ENCODE measurements at regions of chr21 and their contacts with region 1.

Region 1: DNA sequence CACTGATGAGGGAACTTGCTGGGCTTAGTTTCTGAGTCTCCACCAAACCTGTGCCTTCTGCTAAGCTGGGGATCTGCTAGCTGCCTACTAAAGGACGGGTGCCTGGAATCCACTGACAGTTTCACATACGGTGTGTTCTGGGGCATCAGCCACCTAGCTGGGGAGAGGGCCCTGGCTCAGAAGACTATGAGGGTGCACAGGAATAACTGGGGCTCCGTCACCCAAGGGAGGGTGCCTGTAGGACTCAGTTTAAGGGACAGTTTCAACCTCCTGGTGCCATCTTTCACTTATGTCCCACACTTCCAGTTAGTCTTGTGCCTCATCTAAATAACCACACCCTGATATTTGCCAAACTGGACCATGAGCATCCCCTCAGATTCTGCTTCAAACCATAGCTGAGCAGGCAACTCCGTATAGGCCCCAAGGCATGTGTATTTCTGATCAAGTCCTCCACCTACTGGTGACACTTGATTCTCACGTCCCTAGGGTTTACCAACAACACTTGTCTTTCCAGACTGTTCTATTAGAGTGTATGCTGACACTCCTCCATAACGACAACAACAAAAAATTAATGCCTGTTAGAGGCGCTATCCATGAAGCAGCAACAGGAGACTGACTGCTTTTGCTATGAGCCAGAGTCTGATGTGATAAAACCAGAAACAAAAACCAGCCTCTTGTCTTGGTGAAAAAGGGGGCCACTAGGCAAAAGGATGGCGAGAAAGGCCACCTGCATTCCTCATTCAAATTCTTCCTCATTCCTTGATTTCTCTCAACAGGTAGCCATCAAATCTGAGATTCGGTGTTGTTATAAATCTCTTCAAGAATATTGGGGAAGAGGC is 55.0 kb upstream of the PAXBP1 start:
- DNase-seq: peak; percentile 56 to 65
- H3K4me3 ChIP-seq: no peak overlapping the region
- H3K4me3 Mint-ChIP-seq: no peak overlapping the region
- H3K27ac Mint-ChIP-seq: no peak overlapping the region
- H3K4me1 ChIP-seq: no peaks in the 10 kb centered on the region
- H3K4me1 Mint-ChIP-seq: no peaks in the 10 kb centered on the region
- H3K27me3 ChIP-seq: no peaks in the 10 kb centered on the region
- H3K27me3 Mint-ChIP-seq: peaks cover 3% of the 10 kb centered on the region
- CTCF ChIP-seq: peak; percentile 74 to 76

Region 2: DNA sequence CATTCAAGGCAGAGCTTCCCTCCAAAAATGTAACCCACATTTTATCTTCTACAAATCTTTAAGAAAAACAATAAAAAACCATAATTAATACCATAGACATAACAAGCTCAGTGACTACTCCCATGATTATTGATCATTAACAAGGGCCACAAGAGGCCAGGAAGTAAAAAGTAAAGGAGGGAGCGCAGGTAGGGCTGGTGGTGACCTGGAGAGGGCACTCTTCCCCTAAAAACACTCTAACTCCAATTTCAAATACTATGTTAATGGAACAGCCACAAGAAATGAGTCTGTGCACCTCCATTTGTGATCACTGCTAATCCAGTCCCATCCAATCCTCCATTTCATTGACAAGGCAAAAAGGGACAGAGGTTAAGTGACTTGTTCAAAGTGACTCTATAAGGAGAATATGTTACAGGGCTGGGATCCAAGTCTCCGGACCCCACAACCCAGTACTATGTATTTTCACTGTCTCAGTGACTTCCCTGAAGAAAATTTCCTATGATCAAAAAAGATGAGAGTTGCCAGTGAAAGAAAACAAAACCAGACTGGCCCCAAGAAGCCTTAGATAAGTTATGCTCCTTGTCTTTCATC is 173.1 kb before region 1 on chr21:
- CTCF ChIA-PET with region 1: interaction called, 4 read pairs
- POLR2A ChIA-PET with region 1: no interaction called
- intact Hi-C with region 1: loop called (anchors 1 kb)
- DNase-seq: peak in 1 of 2 experiments; percentile 49
- H3K4me3 ChIP-seq: no peak overlapping the region
- H3K4me3 Mint-ChIP-seq: no peak overlapping the region
- H3K27ac Mint-ChIP-seq: no peak overlapping the region
- H3K4me1 ChIP-seq: no peaks in the 10 kb centered on the region
- H3K4me1 Mint-ChIP-seq: no peaks in the 10 kb centered on the region
- H3K27me3 ChIP-seq: no peaks in the 10 kb centered on the region
- H3K27me3 Mint-ChIP-seq: no peaks in the 10 kb centered on the region
- CTCF ChIP-seq: peak; percentile 59 to 68

Region 3: DNA sequence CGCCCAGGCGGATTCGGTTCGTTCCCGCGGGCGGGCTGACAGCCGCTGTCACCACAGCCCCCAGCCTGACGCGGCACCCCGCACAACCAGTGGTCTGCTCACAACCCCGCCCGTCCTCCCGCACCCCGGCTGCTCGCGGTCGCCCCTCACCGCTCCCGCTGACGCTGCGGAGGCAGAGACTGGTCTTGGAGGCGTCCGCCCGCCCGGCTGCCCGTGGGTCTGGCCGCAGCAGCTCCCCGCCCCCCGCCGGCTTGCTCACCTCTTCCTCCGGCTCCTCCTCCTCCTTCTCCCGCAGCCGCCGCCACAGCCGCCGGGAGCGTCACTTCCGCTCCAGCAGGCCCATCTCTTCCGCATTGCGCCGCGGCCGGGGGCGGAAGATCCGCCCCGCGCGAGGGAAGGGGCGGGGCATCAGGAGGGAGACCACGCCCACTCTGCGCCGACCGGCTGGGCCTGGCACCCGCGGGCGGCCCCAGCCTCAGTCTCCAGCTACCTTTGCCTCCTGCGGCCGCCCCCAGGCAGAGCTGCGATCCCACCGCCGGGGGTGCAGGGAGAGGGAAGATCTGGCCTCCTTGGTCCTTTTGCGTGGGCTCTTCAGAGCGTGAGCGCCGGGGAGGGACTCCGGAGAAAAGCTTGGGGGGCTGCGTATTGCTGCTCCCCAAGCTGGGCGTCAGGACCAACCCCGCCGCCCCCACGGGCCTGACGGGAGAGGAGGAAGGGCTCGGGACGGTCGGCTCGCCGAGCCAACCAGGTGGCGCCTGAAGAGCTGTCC is 98.7 kb before region 1 on chr21 and contains the start of gene SYNJ1:
- CTCF ChIA-PET with region 1: no interaction called
- POLR2A ChIA-PET with region 1: interaction called, 18 read pairs
- intact Hi-C with region 1: no loop called
- DNase-seq: peak; percentile 95
- H3K4me3 ChIP-seq: peak within 1 kb of the TSS; percentile 97
- H3K4me3 Mint-ChIP-seq: peak within 1 kb of the TSS; percentile 99
- H3K27ac Mint-ChIP-seq: peak within 1 kb of the TSS; percentile 91
- H3K4me1 ChIP-seq: peaks cover 4% of the 10 kb centered on the region; the same call in 1 of the 2 replicates
- H3K4me1 Mint-ChIP-seq: peaks cover 6% of the 10 kb centered on the region
- H3K27me3 ChIP-seq: no peaks in the 10 kb centered on the region
- H3K27me3 Mint-ChIP-seq: no peaks in the 10 kb centered on the region
- CTCF ChIP-seq: no peak
- total RNA-seq, gene SYNJ1: 8.3 and 11.5 TPM in 2 replicates

Region 4: GRCh38 chr21:32770871-32771523 is 55.6 kb before region 1 on chr21:
- CTCF ChIA-PET with region 1: no interaction called
- POLR2A ChIA-PET with region 1: no interaction called
- intact Hi-C with region 1: loop called (anchors 1 kb)
- DNase-seq: peak; percentile 62 to 67
- H3K4me3 ChIP-seq: peak overlapping the region; percentile 85
- H3K4me3 Mint-ChIP-seq: peak overlapping the region; percentile 91
- H3K27ac Mint-ChIP-seq: peak overlapping the region; percentile 90
- H3K4me1 ChIP-seq: 0 out of 2 replicates have a peak, but pooled peaks cover 9% of the 10 kb centered on the region
- H3K4me1 Mint-ChIP-seq: peaks cover 8% of the 10 kb centered on the region
- H3K27me3 ChIP-seq: no peaks in the 10 kb centered on the region
- H3K27me3 Mint-ChIP-seq: no peaks in the 10 kb centered on the region
- CTCF ChIP-seq: peak in 1 of 2 experiments; percentile 18

Region 5: DNA sequence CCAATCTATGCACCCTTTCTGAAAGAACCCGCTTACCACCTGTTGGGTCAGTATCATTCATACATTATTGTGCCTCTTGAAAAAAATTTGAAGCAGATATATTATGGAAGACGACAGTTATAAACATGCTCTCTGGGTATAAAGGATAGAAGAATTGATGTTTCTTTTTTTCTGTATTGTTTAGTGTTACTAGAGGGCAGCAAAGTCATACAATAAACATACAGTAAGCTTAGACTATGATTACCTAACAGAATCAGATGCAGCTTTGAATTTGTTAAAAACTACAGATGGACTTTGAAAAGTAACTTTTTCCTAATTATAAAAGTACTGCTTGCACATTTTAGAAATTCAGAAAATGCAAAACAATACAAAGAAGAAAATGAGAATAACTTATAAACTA is 43.9 kb before region 1 on chr21:
- CTCF ChIA-PET with region 1: interaction called, 14 read pairs
- POLR2A ChIA-PET with region 1: no interaction called
- intact Hi-C with region 1: loop called (anchors 1 kb)
- DNase-seq: no peak
- H3K4me3 ChIP-seq: no peak overlapping the region
- H3K4me3 Mint-ChIP-seq: no peak overlapping the region
- H3K27ac Mint-ChIP-seq: no peak overlapping the region
- H3K4me1 ChIP-seq: no peaks in the 10 kb centered on the region
- H3K4me1 Mint-ChIP-seq: no peaks in the 10 kb centered on the region
- H3K27me3 ChIP-seq: no peaks in the 10 kb centered on the region
- H3K27me3 Mint-ChIP-seq: no peaks in the 10 kb centered on the region
- CTCF ChIP-seq: no peak

Region 6: GRCh38 chr21:32790626-32791025 is 35.9 kb before region 1 on chr21:
- CTCF ChIA-PET with region 1: interaction called, 10 read pairs
- POLR2A ChIA-PET with region 1: no interaction called
- intact Hi-C with region 1: no loop called
- DNase-seq: no peak
- H3K4me3 ChIP-seq: no peak overlapping the region
- H3K4me3 Mint-ChIP-seq: no peak overlapping the region
- H3K27ac Mint-ChIP-seq: no peak overlapping the region
- H3K4me1 ChIP-seq: no peaks in the 10 kb centered on the region
- H3K4me1 Mint-ChIP-seq: peaks cover 8% of the 10 kb centered on the region
- H3K27me3 ChIP-seq: no peaks in the 10 kb centered on the region
- H3K27me3 Mint-ChIP-seq: no peaks in the 10 kb centered on the region
- CTCF ChIP-seq: no peak

Measured in Caco-2 (cell line).